ENCODE measurements at regions of chr19 and their contacts with region 1.

Region 1: DNA sequence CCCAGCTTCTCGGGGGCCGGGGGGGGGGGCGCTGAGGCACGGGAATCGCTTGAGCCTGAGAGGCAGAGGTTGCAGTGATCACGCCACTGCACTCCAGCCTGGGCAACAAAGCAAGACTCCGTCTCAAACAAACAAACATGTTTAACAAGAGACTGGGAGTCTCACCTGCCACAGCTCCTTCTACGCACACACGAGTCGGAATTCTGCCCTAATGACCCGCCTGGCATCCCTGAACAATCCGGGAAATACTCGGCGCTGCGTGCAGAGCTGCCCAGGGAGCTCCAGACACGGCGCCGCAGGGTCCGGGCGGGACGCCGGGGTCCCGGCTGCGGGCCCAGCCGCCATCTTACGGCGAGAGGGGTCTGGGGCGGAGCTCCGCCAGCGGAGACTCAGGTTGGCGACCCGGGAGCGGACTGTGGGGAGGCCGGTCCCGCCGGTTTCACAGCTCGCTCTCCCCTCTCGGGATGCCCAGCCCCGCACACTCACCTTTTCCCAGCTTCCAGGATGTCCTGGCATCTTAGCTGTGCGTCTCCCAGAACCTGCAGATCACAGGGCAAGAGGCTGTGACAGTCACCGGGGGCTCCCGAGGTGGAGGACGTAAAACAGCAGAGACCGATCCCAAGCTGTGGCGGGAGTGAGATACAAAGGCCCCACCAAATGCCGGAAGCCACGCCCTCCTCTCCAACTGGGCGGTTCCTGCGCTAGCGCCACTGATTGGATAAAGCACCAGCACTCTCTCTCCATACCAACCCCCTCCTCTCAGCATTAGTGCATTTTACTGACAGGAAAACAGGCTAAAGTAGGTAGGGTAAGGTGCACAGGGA is 23.6 kb upstream of the ZNF724 start:
- DNase-seq: peak; percentile 76 to 93 (median 91)
- ATAC-seq: peak; percentile 100
- H3K4me3 ChIP-seq: peak overlapping the region; percentile 94
- H3K4me3 Mint-ChIP-seq: peak overlapping the region; percentile 94 to 99 (median 98)
- H3K27ac ChIP-seq: peak overlapping the region; percentile 95
- H3K27ac Mint-ChIP-seq: peak overlapping the region; percentile 92 to 98 (median 96)
- H3K4me1 ChIP-seq: peaks cover 0 to 7% of the 10 kb centered on the region in 2 donors
- H3K4me1 Mint-ChIP-seq: peaks cover 15 to 47% (median 30%) of the 10 kb centered on the region in 7 donors
- H3K27me3 ChIP-seq: no peaks in the 10 kb centered on the region
- H3K27me3 Mint-ChIP-seq: no peaks in the 10 kb centered on the region

Region 2: DNA sequence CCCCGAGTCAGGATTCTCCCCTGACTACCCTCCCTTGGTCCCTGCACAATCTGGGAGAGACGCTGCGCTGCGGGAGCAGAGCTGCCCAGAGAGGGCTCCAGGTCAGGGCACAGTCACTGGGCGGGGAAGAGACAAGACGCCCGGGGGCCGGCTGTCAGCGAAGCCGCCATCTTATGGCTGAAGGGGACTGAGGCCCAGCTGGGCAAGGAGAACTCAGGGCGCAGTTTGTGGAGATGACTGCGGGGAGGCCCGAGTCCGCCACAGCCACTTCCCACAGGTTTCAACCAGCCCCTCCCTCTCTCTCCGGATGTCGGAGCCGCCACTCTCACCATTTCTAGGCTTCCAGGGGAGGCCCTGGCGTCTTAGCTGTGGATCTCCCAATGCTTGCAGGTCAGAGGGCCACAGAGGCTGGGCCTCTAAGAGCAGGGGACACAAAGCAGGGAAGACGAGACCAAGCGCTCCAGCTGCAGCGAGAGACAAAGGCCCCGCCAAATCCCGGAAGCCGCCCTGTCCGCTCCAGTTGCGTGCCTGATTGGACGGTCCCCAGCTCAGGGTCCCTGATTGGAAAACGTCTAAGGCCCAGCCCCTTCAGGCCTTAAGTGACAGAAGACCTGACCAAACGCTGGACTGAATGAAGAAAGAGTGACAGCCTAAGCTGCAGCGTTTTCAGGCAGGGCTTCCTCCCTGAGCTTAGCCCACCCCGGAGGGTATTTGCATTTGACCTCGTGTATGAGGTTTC is 23.7 kb before region 1 on chr19 and contains the start of gene ZNF724:
- CTCF ChIA-PET with region 1: interaction called, 5 read pairs
- POLR2A ChIA-PET with region 1: interaction called, 40 read pairs
- intact Hi-C with region 1: loop called (anchors 1 kb)
- DNase-seq: peak; percentile 66 to 91 (median 88)
- ATAC-seq: peak; percentile 100
- H3K4me3 ChIP-seq: peak within 1 kb of the TSS; percentile 84
- H3K4me3 Mint-ChIP-seq: peak within 1 kb of the TSS; percentile 95 to 99 (median 96)
- H3K27ac ChIP-seq: peak within 1 kb of the TSS; percentile 72
- H3K27ac Mint-ChIP-seq: peak within 1 kb of the TSS; percentile 61 to 96 (median 89)
- H3K4me1 ChIP-seq: peaks cover 0 to 6% of the 10 kb centered on the region in 2 donors
- H3K4me1 Mint-ChIP-seq: peaks cover 6 to 22% (median 10%) of the 10 kb centered on the region in 7 donors
- H3K27me3 ChIP-seq: no peaks in the 10 kb centered on the region
- H3K27me3 Mint-ChIP-seq: no peaks in the 10 kb centered on the region
- total RNA-seq, gene ZNF724: 2.9 to 11.3 (median 6.8) TPM

Region 3: DNA sequence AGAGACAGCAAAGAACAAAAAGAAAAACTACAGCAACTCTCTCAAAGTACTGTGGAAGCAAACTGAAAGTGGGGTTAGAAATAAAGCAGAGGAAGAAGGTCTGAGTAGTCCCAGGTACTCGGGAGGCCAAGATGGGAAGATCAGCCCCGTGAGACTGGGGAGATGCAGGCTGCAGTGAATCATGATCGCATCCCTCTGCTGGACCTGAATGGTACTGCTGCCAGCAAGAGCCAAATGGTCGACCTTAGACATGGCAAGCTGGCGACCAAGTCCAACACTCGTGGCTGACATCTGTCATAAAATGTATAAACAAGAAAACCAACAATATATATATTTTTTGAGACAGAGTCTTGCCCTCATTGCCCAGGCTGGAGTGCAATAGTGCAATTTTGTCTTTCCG is 10.1 kb after region 1 on chr19:
- CTCF ChIA-PET with region 1: interaction called, 8 read pairs
- POLR2A ChIA-PET with region 1: interaction called, 17 read pairs
- intact Hi-C with region 1: loop called in 1 of 2 experiments (anchors 1 kb)
- DNase-seq: peak; percentile 26 to 60 (median 42)
- ATAC-seq: peak; percentile 91
- H3K4me3 ChIP-seq: no peak overlapping the region
- H3K4me3 Mint-ChIP-seq: peak overlapping the region in 6 of 10 donors; percentile 2 to 61 (median 30)
- H3K27ac ChIP-seq: no peak overlapping the region
- H3K27ac Mint-ChIP-seq: peak overlapping the region in 2 of 9 donors; percentile 38 to 60
- H3K4me1 ChIP-seq: no peaks in the 10 kb centered on the region
- H3K4me1 Mint-ChIP-seq: peaks cover 3 to 35% (median 25%) of the 10 kb centered on the region in 7 donors
- H3K27me3 ChIP-seq: no peaks in the 10 kb centered on the region
- H3K27me3 Mint-ChIP-seq: peaks cover 0 to 4% (median 0%) of the 10 kb centered on the region in 5 donors

Measured in naive thymus-derived CD4-positive, alpha-beta T cell (primary cell).